GM10248 (cell line): ENCODE measurements at regions of chr14 and their contacts with region 1.

Region 1: DNA sequence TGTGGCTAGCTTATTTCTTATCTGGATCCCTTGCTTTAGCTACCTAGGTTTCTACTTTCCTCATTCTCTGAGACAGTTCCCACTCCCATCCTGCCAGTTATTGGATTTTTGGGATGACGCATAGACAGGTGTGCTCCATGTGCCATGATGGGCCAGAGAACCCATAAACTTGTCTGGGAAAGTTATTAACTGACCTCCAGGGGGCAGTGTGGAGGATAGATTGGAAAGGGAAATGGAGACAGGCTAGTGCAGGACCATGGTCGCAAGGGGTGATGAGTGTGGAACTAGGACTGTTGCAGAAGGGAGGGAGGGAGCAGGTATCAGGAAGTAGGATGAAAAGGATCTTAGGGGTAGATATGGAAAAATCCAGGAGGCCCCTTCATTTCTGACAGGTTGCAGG is 80.3 kb downstream of the ESRRB start:
- DNase-seq: peak; percentile 69
- CTCF ChIP-seq: peak; percentile 42

Region 2: GRCh38 chr14:76439237-76439775 is 16.9 kb before region 1 on chr14:
- CTCF ChIA-PET with region 1: interaction called, 10 read pairs
- POLR2A ChIA-PET with region 1: no interaction called
- DNase-seq: no peak
- CTCF ChIP-seq: no peak

Region 3: GRCh38 chr14:76467711-76468155 is 11.5 kb after region 1 on chr14:
- CTCF ChIA-PET with region 1: interaction called, 30 read pairs
- POLR2A ChIA-PET with region 1: no interaction called
- DNase-seq: no peak
- CTCF ChIP-seq: no peak

Region 4: DNA sequence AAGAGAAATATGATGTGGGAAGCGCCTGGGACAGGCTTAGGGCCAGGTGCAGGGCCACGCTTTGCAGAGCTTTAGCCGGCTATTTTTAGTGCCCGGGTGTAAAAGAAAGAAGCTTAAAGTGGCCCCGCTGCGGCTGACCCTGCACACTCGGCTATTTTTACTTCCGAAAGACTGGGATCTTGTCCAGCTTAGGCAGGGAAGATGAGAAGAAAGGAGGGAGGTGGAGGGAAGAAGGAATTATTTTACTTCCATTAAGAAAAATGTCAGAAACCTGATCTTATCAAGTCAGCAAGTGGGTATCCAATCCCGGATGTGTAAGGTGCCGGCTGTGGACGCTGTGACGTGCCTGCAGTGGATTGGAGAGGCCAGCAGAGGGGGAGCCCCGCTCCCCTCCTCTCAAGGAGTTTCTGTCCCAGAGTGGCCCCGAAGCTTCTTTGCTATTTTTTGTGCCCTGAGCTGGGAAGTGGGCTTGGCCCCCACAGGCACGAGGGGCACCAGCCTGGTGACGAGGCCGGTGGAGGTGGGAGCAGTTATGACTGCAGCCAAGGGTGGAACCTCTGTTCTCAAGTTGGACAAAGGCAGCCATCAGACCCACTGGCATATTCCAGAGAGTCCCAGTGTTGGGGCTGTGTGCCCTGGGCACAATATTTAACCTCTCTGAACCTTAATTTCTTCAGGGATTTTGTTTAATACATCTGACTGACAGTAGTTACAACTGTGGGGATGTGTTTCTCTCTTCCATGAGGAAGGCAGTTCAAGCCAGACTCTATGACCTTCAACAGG is 17.5 kb after region 1 on chr14:
- CTCF ChIA-PET with region 1: interaction called, 30 read pairs
- POLR2A ChIA-PET with region 1: no interaction called
- DNase-seq: no peak
- CTCF ChIP-seq: no peak

Region 5: GRCh38 chr14:76480421-76480820 is 24.2 kb after region 1 on chr14:
- CTCF ChIA-PET with region 1: interaction called, 11 read pairs
- POLR2A ChIA-PET with region 1: no interaction called
- DNase-seq: no peak
- CTCF ChIP-seq: no peak

Region 6: GRCh38 chr14:76497537-76498462 is 41.6 kb after region 1 on chr14:
- CTCF ChIA-PET with region 1: interaction called, 15 read pairs
- POLR2A ChIA-PET with region 1: no interaction called
- DNase-seq: no peak
- CTCF ChIP-seq: no peak

Region 7: GRCh38 chr14:76647697-76648298 is 191.6 kb after region 1 on chr14:
- CTCF ChIA-PET with region 1: interaction called, 29 read pairs
- POLR2A ChIA-PET with region 1: no interaction called
- DNase-seq: peak; percentile 69
- CTCF ChIP-seq: peak; percentile 80